ENCODE measurements at regions of chr2 and their contacts with region 1.

Region 1: DNA sequence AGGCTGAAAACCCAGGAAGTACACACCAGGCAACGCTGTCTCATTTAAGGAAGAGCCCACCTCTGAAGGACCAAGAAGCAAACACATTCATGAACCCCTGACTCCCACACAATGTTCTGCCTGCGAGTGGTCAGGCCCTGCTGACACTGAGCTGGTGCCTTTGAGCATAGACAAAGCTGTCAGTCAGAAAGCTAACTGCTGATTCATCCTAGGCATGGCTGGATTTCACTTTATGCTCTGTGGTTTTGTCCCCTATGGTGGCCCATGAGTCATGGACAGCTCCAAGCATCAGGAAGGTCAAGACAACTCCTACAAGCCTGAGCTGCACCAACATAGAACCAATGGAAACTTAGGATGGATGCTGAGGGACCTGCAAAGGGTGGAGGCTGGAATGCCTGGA is 78.9 kb downstream of the UXS1 start:
- DNase-seq: no peak
- ATAC-seq: peak; percentile 65 to 83 (median 77)
- H3K4me3 ChIP-seq: no peak overlapping the region
- H3K27ac ChIP-seq: peak overlapping the region; percentile 90
- H3K4me1 ChIP-seq: peaks cover 29% of the 10 kb centered on the region
- H3K27me3 ChIP-seq: no peaks in the 10 kb centered on the region
- CTCF ChIP-seq: no peak

Region 2: GRCh38 chr2:106193977-106194778 is 78.9 kb after region 1 on chr2 and contains the start of gene UXS1:
- intact Hi-C with region 1: loop called in 1 of 2 experiments (anchors 5 kb)
- DNase-seq: peak; percentile 98 to 99
- ATAC-seq: peak; percentile 92 to 96 (median 94)
- H3K4me3 ChIP-seq: peak within 1 kb of the TSS; percentile 96
- H3K27ac ChIP-seq: peak within 1 kb of the TSS; percentile 89
- H3K4me1 ChIP-seq: peaks cover 19% of the 10 kb centered on the region
- H3K27me3 ChIP-seq: no peaks in the 10 kb centered on the region
- CTCF ChIP-seq: no peak
- total RNA-seq, gene UXS1: 12.2 to 24.7 (median 21.1) TPM